CD8-positive, alpha-beta T cell (primary cell): ENCODE measurements at regions of chr14 and their contacts with region 1.

Region 1: DNA sequence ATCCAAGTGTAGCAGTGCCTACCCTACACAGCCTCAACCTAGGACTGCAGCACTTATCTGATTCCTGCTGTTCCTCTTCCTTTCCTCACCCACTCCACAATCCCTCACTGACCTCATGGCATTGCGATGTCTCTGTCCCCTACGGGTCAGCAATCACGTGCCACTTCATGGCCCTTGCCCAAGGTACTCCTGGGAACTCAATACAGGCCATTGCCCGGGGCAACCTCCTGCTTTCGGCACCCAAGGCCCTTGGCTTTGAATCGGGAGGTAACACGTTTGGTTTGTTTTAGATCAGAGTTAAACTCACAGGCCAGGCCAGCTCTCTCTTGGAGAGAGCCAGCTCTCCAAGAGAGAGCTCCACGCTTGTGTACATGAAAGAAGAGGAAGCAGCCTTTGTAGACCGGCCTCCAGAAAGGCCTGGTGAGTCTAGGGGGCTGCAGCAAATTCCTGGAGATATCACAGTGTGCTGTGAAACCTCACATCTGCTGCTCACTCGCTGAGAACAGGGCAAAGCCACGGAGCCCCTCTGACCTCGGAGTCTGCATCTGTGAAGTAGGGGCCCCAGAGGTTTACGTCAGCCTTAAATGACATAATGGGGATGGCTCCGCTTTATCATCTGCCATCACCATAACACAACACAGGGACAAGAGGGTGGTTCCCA is 12.2 kb downstream of the CLMN start:
- DNase-seq: no peak
- ATAC-seq: no peak
- H3K4me3 ChIP-seq: no peak overlapping the region
- H3K4me3 Mint-ChIP-seq: no peak overlapping the region
- H3K27ac ChIP-seq: no peak overlapping the region
- H3K27ac Mint-ChIP-seq: no peak overlapping the region
- H3K4me1 ChIP-seq: no peaks in the 10 kb centered on the region
- H3K4me1 Mint-ChIP-seq: no peaks in the 10 kb centered on the region
- H3K27me3 ChIP-seq: no peaks in the 10 kb centered on the region
- H3K27me3 Mint-ChIP-seq: peaks cover 3% of the 10 kb centered on the region
- CTCF ChIP-seq: no peak

Region 2: DNA sequence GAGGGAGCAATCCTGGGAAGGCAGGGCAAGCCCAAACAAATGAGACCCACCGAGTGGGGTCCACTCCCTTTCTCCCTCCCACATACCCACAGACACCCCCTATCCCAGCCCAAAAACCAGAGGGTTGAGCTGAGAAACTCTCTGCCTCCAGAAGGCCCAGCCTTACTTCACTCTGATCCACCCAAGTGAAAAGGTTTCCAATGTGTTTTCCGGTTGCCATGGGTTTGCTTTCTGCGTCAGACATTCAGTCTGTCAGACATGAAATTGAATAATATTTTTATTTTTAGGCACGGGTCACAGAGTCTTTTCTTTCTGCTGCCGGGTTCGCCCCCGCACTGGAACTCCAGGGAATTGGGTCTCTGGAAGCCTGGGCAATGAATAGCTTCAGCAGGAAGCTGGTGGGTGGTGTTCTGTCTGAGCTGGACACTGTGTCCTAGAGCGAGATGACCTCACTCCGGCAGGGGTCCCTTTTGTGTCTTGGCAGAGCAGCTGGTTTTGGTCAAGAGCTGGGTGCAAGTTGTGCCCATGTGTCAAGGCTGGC is 82.0 kb after region 1 on chr14:
- CTCF ChIA-PET with region 1: no interaction called
- POLR2A ChIA-PET with region 1: no interaction called
- intact Hi-C with region 1: loop called in 1 of 2 experiments (anchors 5 kb)
- DNase-seq: no peak
- ATAC-seq: no peak
- H3K4me3 ChIP-seq: no peak overlapping the region
- H3K4me3 Mint-ChIP-seq: no peak overlapping the region
- H3K27ac ChIP-seq: no peak overlapping the region
- H3K27ac Mint-ChIP-seq: no peak overlapping the region
- H3K4me1 ChIP-seq: no peaks in the 10 kb centered on the region
- H3K4me1 Mint-ChIP-seq: no peaks in the 10 kb centered on the region
- H3K27me3 ChIP-seq: peaks cover 0 to 2% of the 10 kb centered on the region in 2 experiments
- H3K27me3 Mint-ChIP-seq: peaks cover 7% of the 10 kb centered on the region
- CTCF ChIP-seq: no peak